ENCODE measurements at regions of chr18 and their contacts with region 1.

Region 1: DNA sequence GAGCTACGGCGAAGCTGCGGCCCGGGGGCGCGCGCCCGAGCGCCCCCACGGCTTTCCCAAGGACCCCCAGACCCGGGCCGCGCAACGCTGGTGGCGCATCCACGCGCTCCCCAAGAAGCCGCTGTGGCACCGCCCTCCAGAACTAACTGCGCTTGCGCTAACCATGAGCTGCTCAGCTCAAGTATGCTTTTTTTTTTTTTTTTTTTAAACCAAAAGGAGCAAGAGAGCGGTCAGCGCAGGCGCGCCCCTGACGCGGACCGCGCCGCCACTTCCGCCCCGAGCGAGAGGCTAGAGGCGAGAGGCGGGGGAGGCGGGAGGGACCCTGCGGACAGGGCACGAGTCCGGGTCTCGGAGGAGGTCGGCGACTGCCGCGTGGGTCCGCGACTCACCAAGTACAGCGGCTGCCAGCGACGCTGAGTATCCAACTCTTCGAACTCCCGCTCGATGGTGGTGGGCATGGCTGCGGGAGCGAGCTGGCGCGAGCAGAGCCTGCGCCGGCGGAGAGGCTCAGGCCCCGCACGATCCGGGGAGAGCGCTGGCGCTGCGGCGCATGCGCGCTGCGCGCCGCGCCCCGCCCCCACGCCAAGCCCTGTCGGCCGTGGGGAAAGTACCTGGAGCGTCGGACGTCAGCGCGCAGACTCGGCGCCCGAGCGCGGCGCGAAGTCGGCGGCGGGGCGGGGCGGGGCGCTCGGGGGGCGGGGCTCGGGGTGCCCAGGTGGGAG is at the start of gene PTPN2:
- DNase-seq: peak; percentile 85 to 96
- H3K4me3 ChIP-seq: peak within 1 kb of the TSS; percentile 71 to 88
- H3K27ac ChIP-seq: peak within 1 kb of the TSS; percentile 99
- H3K4me1 ChIP-seq: peaks cover 0 to 6% of the 10 kb centered on the region in 2 donors
- H3K27me3 ChIP-seq: no peaks in the 10 kb centered on the region
- CTCF ChIP-seq: no peak
- total RNA-seq, gene PTPN2: 81.8 TPM

Region 2: GRCh38 chr18:11908182-11909060 is 975.4 kb before region 1 on chr18 and contains the start of gene MPPE1:
- intact Hi-C with region 1: loop called (anchors 5 kb)
- DNase-seq: peak; percentile 49 to 95
- H3K4me3 ChIP-seq: peak within 1 kb of the TSS; percentile 77 to 94
- H3K27ac ChIP-seq: peak within 1 kb of the TSS; percentile 99 to 100
- H3K4me1 ChIP-seq: peaks cover 0 to 10% of the 10 kb centered on the region in 2 donors
- H3K27me3 ChIP-seq: no peaks in the 10 kb centered on the region
- CTCF ChIP-seq: no peak
- total RNA-seq, gene MPPE1: 18.9 TPM

Region 3: GRCh38 chr18:12317664-12318333 is 566.0 kb before region 1 on chr18:
- intact Hi-C with region 1: loop called (anchors 10 kb)
- DNase-seq: no peak
- H3K4me3 ChIP-seq: peak overlapping the region in 1 of 2 donors; percentile 9
- H3K27ac ChIP-seq: peak overlapping the region; percentile 22 to 66
- H3K4me1 ChIP-seq: peaks cover 10 to 36% of the 10 kb centered on the region in 2 donors
- H3K27me3 ChIP-seq: no peaks in the 10 kb centered on the region
- CTCF ChIP-seq: no peak

Region 4: DNA sequence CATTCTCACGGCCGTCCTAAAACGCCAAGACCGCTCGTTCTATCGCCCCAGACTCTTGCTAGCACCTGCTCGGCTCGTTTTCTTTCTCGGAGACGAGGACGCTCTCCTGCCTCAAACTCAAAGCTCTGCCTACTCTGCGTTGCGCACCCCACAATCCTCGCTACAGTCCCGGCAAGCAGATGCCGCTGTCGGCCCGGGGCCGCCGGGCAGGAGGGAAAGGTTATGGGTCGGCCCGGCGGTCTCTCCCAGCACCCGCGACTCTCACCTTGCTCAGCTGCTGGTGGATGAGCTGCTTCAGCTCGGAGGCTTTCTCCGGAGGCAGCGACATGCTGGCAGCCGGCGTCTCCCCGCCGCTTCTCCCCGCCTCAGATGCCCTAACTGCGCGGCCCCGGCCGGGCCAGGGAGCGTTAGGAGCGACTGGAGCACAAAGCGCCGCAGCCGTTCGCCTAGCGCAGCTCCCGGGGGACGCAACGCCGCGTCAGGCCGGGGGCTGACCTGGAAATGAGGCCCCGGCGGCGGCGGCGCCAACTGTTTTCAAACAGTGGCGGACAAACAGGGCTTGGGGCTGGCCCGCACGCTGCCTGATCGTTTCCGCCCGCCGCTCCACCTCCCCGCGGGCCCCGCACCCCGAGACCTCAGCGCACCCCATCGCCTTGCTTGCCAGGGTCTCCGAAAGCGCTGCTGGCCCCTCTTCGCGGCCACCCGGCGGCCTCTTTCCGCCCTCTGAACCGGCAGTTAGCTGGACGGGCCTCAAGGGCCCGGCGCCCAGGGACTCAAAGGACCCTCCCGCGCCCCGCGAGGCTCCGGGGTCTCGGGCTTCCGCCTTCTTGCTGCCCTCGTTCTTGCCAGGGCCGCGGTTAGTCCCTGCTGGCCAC is 181.4 kb before region 1 on chr18 and contains the starts of genes CEP76 and PSMG2:
- intact Hi-C with region 1: loop called (anchors 2 kb)
- DNase-seq: peak; percentile 55 to 93
- H3K4me3 ChIP-seq: peak within 1 kb of the TSS; percentile 77 to 83
- H3K27ac ChIP-seq: peak within 1 kb of the TSS; percentile 97 to 98
- H3K4me1 ChIP-seq: peaks cover 3 to 17% of the 10 kb centered on the region in 2 donors
- H3K27me3 ChIP-seq: no peaks in the 10 kb centered on the region
- CTCF ChIP-seq: peak in 1 of 3 experiments; percentile 6
- total RNA-seq, gene CEP76: 10.3 TPM
- total RNA-seq, gene PSMG2: 52.2 TPM

Region 5: DNA sequence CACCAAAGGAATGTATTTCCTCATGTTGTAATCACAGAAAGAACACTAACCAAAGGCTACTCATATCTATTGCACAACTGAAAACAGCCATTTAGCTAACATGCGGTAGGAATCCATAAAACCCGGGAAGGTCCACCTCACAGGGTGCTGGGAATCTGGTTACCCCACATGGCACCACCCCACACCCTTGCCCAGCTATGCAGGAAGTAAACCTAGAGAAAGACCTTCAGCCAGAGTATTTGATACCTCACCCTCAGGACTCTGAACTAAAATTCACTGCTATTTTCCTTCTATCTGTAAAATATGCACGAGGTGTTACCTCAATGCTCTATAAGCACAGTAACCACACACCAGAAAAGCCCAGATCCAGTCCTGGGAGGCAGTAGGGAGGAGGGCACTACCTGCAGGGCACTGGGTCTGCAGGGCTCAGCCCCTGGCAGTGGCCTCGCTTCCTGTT is 45.6 kb before region 1 on chr18:
- intact Hi-C with region 1: loop called (anchors 2 kb)
- DNase-seq: peak in 1 of 2 donors; percentile 83
- H3K4me3 ChIP-seq: peak overlapping the region in 1 of 2 donors; percentile 29
- H3K27ac ChIP-seq: peak overlapping the region; percentile 54 to 65
- H3K4me1 ChIP-seq: peaks cover 4 to 7% of the 10 kb centered on the region in 2 donors
- H3K27me3 ChIP-seq: no peaks in the 10 kb centered on the region
- CTCF ChIP-seq: no peak

Region 6: DNA sequence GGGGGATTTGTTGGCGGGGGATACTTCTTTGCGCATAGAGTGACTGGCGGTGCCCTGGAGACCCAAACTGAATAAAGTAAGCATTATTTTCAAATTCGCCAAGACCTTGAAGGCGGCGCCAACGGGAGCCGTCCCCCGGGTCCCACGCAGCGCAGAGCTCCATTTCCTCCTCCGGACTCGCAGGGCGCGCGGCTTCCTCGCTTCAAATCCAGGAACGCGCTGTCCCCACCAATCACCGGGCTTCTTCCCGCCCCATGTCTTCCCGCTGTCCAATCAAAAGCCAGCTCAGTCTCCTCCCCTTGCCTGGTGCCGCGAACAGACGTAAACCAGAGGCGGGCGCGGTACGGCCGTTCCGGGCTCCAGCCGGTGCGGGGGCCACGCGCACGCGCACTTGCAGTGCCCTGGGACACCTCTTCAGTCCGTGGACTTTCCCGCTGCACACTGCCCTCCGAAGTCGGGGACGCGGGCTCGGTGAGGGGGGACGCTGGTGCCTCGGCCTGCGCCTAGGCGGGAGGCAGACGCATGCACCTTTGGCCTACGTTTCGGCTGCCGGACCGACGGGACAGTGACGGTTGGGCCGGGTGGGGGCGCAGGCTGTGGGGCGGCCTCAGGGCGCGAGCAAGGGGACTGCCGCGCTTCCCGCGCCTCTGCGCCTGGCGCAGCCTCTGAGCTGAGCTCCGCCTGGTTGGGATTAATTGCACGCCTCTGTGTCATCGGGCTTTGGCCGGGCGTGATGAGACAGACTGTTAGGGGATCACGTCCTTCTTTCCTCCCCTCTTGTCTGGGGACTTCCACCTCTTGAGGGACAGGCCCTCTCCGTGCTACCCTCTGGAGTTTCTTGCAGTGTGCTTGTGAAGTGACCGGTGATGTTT is 107.4 kb after region 1 on chr18 and contains the start of gene CEP192:
- intact Hi-C with region 1: loop called (anchors 2 kb)
- DNase-seq: peak; percentile 92 to 99
- H3K4me3 ChIP-seq: peak within 1 kb of the TSS; percentile 61 to 87
- H3K27ac ChIP-seq: peak within 1 kb of the TSS; percentile 73 to 80
- H3K4me1 ChIP-seq: peaks cover 0 to 9% of the 10 kb centered on the region in 2 donors
- H3K27me3 ChIP-seq: no peaks in the 10 kb centered on the region
- CTCF ChIP-seq: no peak
- total RNA-seq, gene CEP192: 3.1 TPM